ENCODE measurements at regions of chr13 and their contacts with region 1.

Region 1: DNA sequence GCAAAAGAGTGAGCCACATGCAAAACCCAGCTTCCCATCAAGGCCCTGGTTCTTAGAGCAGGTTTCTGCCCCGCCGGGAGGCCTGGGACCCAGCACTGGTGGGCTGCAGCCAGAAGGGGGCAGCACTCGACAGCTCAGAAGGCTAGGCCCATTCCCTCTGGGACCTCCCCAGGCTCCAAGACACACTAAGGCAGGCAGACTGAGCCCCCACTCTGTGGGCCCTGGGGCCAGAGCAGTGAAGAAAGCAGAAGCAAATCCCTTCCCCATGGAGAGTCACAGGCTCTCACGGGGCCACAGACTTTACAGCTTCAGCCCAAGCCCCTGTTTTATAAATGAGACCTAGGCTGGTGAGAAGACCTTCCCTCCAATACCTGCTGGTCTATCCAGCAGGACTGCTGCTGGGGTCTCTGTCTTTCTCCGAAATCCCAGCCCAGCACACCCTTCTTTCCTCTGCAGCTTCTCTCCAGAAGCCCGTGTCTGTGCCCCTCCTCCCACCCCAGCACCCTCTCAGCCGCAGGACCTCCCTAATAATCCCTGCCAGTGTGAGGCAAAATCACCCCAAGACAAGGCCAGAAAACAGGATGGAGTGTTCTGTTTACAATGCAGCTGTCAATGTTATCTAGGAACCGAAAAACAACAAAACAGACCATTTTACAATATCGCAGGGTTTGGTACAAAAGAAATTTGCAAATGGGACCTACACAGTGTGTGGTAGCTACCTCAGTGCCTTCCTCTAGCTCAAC is 109.3 kb downstream of the ABCC4 start:
- DNase-seq: peak in 8 of 9 donors; percentile 12 to 67 (median 36)
- ATAC-seq: peak; percentile 73
- H3K4me3 ChIP-seq: no peak overlapping the region
- H3K4me3 Mint-ChIP-seq: no peak overlapping the region
- H3K27ac ChIP-seq: no peak overlapping the region
- H3K27ac Mint-ChIP-seq: peak overlapping the region in 3 of 9 donors; percentile 20 to 69 (median 32)
- H3K4me1 ChIP-seq: peaks cover 0 to 2% of the 10 kb centered on the region in 2 donors
- H3K4me1 Mint-ChIP-seq: peaks cover 2 to 21% (median 19%) of the 10 kb centered on the region in 7 donors
- H3K27me3 ChIP-seq: no peaks in the 10 kb centered on the region
- H3K27me3 Mint-ChIP-seq: no peaks in the 10 kb centered on the region

Region 2: DNA sequence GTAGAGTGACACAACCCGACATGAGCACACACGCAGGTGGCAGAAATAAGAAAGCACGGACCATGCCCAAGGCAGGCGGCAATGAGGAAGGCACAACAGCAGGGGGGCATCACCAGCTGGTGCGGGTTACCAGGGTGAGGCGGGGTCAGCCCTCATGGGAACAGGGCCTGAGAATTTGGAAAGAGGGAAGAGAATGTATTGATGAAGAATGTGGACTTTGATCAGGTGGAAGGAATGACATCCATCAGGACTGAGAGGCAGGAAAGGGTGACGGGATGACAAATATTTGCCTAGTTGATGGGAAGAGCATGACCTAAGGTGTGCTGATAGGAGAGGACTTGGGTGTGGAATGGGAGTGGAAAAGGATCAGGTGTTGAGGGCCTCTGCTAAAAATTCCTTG is 68.3 kb before region 1 on chr13:
- CTCF ChIA-PET with region 1: no interaction called
- POLR2A ChIA-PET with region 1: no interaction called
- intact Hi-C with region 1: no loop called
- DNase-seq: no peak
- ATAC-seq: no peak
- H3K4me3 ChIP-seq: no peak overlapping the region
- H3K4me3 Mint-ChIP-seq: no peak overlapping the region
- H3K27ac ChIP-seq: no peak overlapping the region
- H3K27ac Mint-ChIP-seq: peak overlapping the region in 1 of 9 donors; percentile 22
- H3K4me1 ChIP-seq: no peaks in the 10 kb centered on the region
- H3K4me1 Mint-ChIP-seq: peaks cover 7 to 25% (median 18%) of the 10 kb centered on the region in 7 donors
- H3K27me3 ChIP-seq: no peaks in the 10 kb centered on the region
- H3K27me3 Mint-ChIP-seq: no peaks in the 10 kb centered on the region

Region 3: GRCh38 chr13:95301183-95301967 is 109.4 kb after region 1 on chr13 and contains the start of gene ABCC4:
- CTCF ChIA-PET with region 1: interaction called, 5 read pairs
- POLR2A ChIA-PET with region 1: no interaction called
- intact Hi-C with region 1: loop called (anchors 2 kb)
- DNase-seq: peak; percentile 22 to 78 (median 48)
- ATAC-seq: peak; percentile 86
- H3K4me3 ChIP-seq: peak within 1 kb of the TSS; percentile 50
- H3K4me3 Mint-ChIP-seq: peak within 1 kb of the TSS; percentile 84 to 96 (median 87)
- H3K27ac ChIP-seq: peak within 1 kb of the TSS; percentile 41
- H3K27ac Mint-ChIP-seq: peak within 1 kb of the TSS in 8 of 9 donors; percentile 6 to 86 (median 66)
- H3K4me1 ChIP-seq: peaks cover 0 to 5% of the 10 kb centered on the region in 2 donors
- H3K4me1 Mint-ChIP-seq: peaks cover 7 to 41% (median 27%) of the 10 kb centered on the region in 7 donors
- H3K27me3 ChIP-seq: no peaks in the 10 kb centered on the region
- H3K27me3 Mint-ChIP-seq: peaks cover 0 to 15% (median 0%) of the 10 kb centered on the region in 5 donors
- total RNA-seq, gene ABCC4: 5.8 to 9.2 (median 7.5) TPM